ENCODE measurements at regions of chr9 and their contacts with region 1.

Region 1: GRCh38 chr9:94603259-94604160 is 9.9 kb upstream of the FBP2 start:
- DNase-seq: peak; percentile 10
- ATAC-seq: peak; percentile 45; the same call in 1 of the 2 replicates
- H3K4me3 ChIP-seq: no peak overlapping the region
- H3K27ac ChIP-seq: no peak overlapping the region
- H3K4me1 ChIP-seq: no peaks in the 10 kb centered on the region
- H3K27me3 ChIP-seq: no peaks in the 10 kb centered on the region
- CTCF ChIP-seq: peak; percentile 56

Region 2: GRCh38 chr9:95206143-95206542 is 602.6 kb after region 1 on chr9:
- CTCF ChIA-PET with region 1: interaction called, 23 read pairs
- POLR2A ChIA-PET with region 1: no interaction called
- intact Hi-C with region 1: no loop called
- DNase-seq: no peak
- ATAC-seq: no peak
- H3K4me3 ChIP-seq: no peak overlapping the region
- H3K27ac ChIP-seq: no peak overlapping the region
- H3K4me1 ChIP-seq: no peaks in the 10 kb centered on the region
- H3K27me3 ChIP-seq: no peaks in the 10 kb centered on the region
- CTCF ChIP-seq: no peak